B cell (primary cell): ENCODE measurements at regions of chr3 and their contacts with region 1.

Region 1: DNA sequence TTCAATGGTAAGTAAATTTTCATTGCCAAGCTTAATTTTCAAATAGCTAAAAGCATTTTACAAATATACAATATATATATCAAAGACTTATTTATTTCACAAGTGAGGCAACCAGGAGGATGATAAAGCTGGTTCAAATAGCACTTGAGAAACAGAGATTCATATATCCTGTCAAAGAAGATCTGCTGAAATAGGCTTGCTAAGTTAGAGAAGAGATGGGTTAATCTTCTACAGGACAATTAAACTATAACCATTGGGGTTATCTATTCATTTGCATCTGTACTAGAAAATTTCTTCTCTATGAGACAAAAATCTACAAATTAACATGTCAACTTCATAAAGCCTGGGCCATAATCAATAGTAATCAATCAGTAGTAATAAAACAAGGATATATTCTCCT is 637.7 kb upstream of the UBE2E2 start:
- DNase-seq: no peak
- ATAC-seq: no peak
- H3K4me3 ChIP-seq: no peak overlapping the region
- H3K4me3 Mint-ChIP-seq: no peak overlapping the region
- H3K27ac ChIP-seq: no peak overlapping the region
- H3K27ac Mint-ChIP-seq: no peak overlapping the region
- H3K4me1 ChIP-seq: no peaks in the 10 kb centered on the region
- H3K4me1 Mint-ChIP-seq: no peaks in the 10 kb centered on the region
- H3K27me3 ChIP-seq: no peaks in the 10 kb centered on the region
- H3K27me3 Mint-ChIP-seq: no peaks in the 10 kb centered on the region
- CTCF ChIP-seq: no peak

Region 2: GRCh38 chr3:22960105-22960984 is 395.0 kb after region 1 on chr3:
- CTCF ChIA-PET with region 1: interaction called, 5 read pairs
- POLR2A ChIA-PET with region 1: no interaction called
- intact Hi-C with region 1: loop called (anchors 2 kb)
- DNase-seq: peak; percentile 28
- ATAC-seq: no peak
- H3K4me3 ChIP-seq: no peak overlapping the region
- H3K4me3 Mint-ChIP-seq: no peak overlapping the region
- H3K27ac ChIP-seq: no peak overlapping the region
- H3K27ac Mint-ChIP-seq: no peak overlapping the region
- H3K4me1 ChIP-seq: no peaks in the 10 kb centered on the region
- H3K4me1 Mint-ChIP-seq: peaks cover 7% of the 10 kb centered on the region
- H3K27me3 ChIP-seq: no peaks in the 10 kb centered on the region
- H3K27me3 Mint-ChIP-seq: peaks cover 4% of the 10 kb centered on the region
- CTCF ChIP-seq: peak; percentile 67

Region 3: DNA sequence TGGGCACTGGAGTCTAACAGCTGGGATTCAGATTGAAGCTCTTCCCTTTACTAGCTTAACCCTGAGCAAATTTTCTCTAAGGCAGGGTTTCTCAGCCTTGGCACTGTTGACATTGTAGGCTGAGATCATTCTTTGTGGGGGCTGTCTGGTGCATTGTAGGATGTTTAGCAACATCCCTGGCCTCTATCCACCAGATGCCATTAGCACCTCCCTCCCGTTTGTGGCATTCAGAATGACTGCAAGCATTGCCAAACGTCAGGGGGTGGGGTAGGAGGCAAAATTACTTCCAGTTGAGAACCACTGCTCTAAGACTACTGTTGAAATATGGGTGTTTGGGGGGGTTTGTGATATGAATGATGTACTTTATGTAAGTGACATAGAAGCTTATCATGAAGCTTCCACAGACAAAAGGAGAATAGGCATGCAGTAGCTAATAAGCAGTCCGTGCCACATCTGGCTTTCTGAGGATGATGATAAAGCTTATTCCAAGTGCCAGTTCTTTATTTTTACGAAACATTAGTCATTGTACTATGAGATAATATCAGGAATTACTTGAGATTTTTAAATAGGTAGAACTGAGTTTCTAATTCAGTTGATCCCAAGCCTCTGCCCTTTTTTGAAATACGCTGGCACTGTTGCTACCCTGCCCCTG is 1312.1 kb after region 1 on chr3:
- CTCF ChIA-PET with region 1: no interaction called
- POLR2A ChIA-PET with region 1: no interaction called
- intact Hi-C with region 1: loop called (anchors 10 kb)
- DNase-seq: no peak
- ATAC-seq: no peak
- H3K4me3 ChIP-seq: no peak overlapping the region
- H3K4me3 Mint-ChIP-seq: no peak overlapping the region
- H3K27ac ChIP-seq: no peak overlapping the region
- H3K27ac Mint-ChIP-seq: no peak overlapping the region
- H3K4me1 ChIP-seq: peaks cover 0 to 13% of the 10 kb centered on the region in 2 donors
- H3K4me1 Mint-ChIP-seq: peaks cover 56% of the 10 kb centered on the region
- H3K27me3 ChIP-seq: no peaks in the 10 kb centered on the region
- H3K27me3 Mint-ChIP-seq: no peaks in the 10 kb centered on the region
- CTCF ChIP-seq: no peak